ENCODE measurements at regions of chr13 and their contacts with region 1.

Region 1: GRCh38 chr13:79423801-79424642 is 18.0 kb upstream of the RBM26 start:
- DNase-seq: no peak
- ATAC-seq: peak in 2 of 4 donors; percentile 37 to 41
- H3K4me3 ChIP-seq: no peak overlapping the region
- H3K27ac ChIP-seq: no peak overlapping the region
- H3K4me1 ChIP-seq: peaks cover 0 to 3% (median 0%) of the 10 kb centered on the region in 12 donors
- H3K27me3 ChIP-seq: no peaks in the 10 kb centered on the region
- CTCF ChIP-seq: peak; percentile 52 to 81 (median 70)
- POLR2A ChIP-seq: no peak

Region 2: DNA sequence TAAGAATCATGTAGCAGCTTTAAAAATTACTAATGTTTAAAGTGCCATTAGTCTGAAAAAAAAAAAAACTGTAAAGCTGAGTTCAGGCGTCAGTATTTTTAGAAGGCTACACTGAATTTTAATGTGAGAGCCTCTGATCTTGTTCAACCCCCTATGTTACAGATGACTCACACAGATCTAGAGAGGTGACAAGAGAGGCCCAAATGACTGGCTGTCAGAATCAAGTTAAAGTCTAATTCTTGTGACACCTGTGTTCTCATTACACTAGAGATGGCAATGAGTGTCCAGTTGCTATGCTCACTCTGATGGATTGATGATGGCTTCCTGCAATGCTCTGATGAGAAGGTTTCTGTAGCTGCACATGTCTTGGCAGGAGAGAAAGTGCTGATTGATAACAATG is 561.6 kb before region 1 on chr13:
- intact Hi-C with region 1: no loop called
- DNase-seq: no peak
- ATAC-seq: no peak
- H3K4me3 ChIP-seq: no peak overlapping the region
- H3K27ac ChIP-seq: no peak overlapping the region
- H3K4me1 ChIP-seq: no peaks in the 10 kb centered on the region
- H3K27me3 ChIP-seq: peaks cover 0 to 2% (median 0%) of the 10 kb centered on the region in 9 donors
- CTCF ChIP-seq: no peak
- POLR2A ChIP-seq: no peak

Region 3: GRCh38 chr13:79541426-79542049 is 117.5 kb after region 1 on chr13:
- intact Hi-C with region 1: loop called (anchors 1 to 5 kb)
- DNase-seq: no peak
- ATAC-seq: no peak
- H3K4me3 ChIP-seq: no peak overlapping the region
- H3K27ac ChIP-seq: no peak overlapping the region
- H3K4me1 ChIP-seq: peaks cover 0 to 7% (median 0%) of the 10 kb centered on the region in 12 donors
- H3K27me3 ChIP-seq: no peaks in the 10 kb centered on the region
- CTCF ChIP-seq: peak; percentile 78 to 93 (median 84)
- POLR2A ChIP-seq: no peak

Region 4: DNA sequence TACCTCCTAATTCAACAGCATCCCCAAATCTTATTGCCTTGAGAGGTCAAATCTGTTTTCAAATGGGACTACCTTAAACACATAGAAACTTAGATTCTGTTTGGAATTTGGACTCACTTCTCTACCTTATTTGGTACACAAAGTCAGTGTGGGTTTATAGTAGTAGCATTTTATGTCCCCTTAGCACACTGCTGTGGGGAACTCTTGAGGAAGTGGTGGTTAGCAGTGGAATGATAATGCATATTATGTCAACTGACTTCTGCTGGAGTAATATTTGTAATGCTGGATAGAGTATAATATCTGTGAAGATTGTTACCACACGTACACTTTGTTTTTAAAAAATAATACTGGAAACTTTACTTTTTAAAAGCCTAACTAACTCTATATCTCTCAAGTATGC is 443.2 kb after region 1 on chr13:
- intact Hi-C with region 1: no loop called
- DNase-seq: no peak
- ATAC-seq: no peak
- H3K4me3 ChIP-seq: no peak overlapping the region
- H3K27ac ChIP-seq: no peak overlapping the region
- H3K4me1 ChIP-seq: peaks cover 0 to 2% (median 0%) of the 10 kb centered on the region in 12 donors
- H3K27me3 ChIP-seq: no peaks in the 10 kb centered on the region
- CTCF ChIP-seq: no peak
- POLR2A ChIP-seq: no peak

Measured in heart left ventricle (tissue), 16 donors.